Activated CD8-positive, alpha-beta T cell treated with anti-CD3 and anti-CD28 coated beads, Interleukin-2, amount 10 ng/mL, durations not matched to agents 7 days and 5 days (primary cell): ENCODE measurements at regions of chr7 and their contacts with region 1.

Region 1: DNA sequence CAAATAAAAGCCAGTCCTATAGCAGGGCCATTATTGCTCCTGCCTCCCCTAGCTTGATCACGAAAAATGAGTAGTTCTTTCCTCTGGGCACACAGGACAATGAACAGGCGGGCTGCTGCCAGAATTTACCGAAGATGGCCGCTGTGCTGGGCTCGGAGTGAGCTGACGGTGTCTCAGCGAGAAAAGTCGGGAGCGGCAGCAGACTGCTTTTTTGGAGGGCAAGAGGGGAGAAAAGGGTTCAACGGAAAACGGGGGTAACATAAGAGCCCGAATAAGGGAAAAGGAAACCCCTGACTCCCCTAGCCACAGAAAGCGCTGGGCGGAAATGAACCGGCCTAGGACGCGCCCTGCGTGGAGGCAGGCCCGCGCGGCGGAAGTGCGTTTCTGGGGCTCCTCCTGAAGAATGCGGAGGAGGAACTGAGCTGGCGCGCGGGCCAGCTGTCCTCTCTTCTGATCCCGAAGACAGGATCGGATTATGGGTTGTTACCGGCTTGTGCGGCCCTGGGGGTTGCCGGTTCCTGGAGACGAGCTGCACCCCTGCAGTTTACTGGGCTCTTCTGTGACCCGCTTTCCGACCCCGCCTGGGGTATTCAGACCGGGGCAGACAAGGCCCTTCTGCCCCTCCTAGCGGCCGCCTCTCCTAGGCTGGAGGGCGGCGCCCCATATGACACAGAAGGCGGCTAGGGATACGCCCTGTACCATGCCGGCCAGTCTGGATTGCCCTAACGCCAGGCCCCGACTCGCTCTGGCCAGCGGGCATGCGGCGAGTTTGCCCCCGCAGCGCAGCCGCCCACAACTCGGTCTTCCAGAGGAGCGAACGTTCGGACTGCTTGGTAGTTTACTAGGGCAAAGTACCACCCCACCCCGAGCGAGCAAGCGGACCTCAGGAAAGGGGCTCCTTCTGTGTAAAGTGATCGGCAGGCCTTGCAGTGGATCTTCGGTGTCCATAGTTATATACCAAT is 30.1 kb upstream of the KMT2E start:
- DNase-seq: peak; percentile 89
- ATAC-seq: peak; percentile 92
- H3K4me3 Mint-ChIP-seq: peak overlapping the region; percentile 100
- H3K27ac Mint-ChIP-seq: peak overlapping the region; percentile 100
- H3K4me1 Mint-ChIP-seq: peaks cover 69% of the 10 kb centered on the region
- H3K27me3 Mint-ChIP-seq: no peaks in the 10 kb centered on the region

Region 2: GRCh38 chr7:104923010-104923421 is 60.8 kb before region 1 on chr7:
- CTCF ChIA-PET with region 1: interaction called, 65 read pairs
- POLR2A ChIA-PET with region 1: interaction called, 7 read pairs
- DNase-seq: peak; percentile 86
- ATAC-seq: peak; percentile 98
- H3K4me3 Mint-ChIP-seq: no peak overlapping the region
- H3K27ac Mint-ChIP-seq: peak overlapping the region; percentile 52
- H3K4me1 Mint-ChIP-seq: peaks cover 7% of the 10 kb centered on the region
- H3K27me3 Mint-ChIP-seq: peaks cover 6% of the 10 kb centered on the region

Region 3: GRCh38 chr7:104956753-104957450 is 27.0 kb before region 1 on chr7:
- CTCF ChIA-PET with region 1: interaction called, 35 read pairs
- POLR2A ChIA-PET with region 1: interaction called, 5 read pairs
- DNase-seq: peak; percentile 69
- ATAC-seq: peak; percentile 86
- H3K4me3 Mint-ChIP-seq: peak overlapping the region; percentile 34
- H3K27ac Mint-ChIP-seq: peak overlapping the region; percentile 89
- H3K4me1 Mint-ChIP-seq: peaks cover 41% of the 10 kb centered on the region
- H3K27me3 Mint-ChIP-seq: no peaks in the 10 kb centered on the region

Region 4: GRCh38 chr7:105003275-105003674 is 19.4 kb after region 1 on chr7:
- CTCF ChIA-PET with region 1: interaction called, 21 read pairs
- POLR2A ChIA-PET with region 1: interaction called, 373 read pairs
- DNase-seq: no peak
- ATAC-seq: peak; percentile 58
- H3K4me3 Mint-ChIP-seq: peak overlapping the region; percentile 54
- H3K27ac Mint-ChIP-seq: peak overlapping the region; percentile 68
- H3K4me1 Mint-ChIP-seq: peaks cover 63% of the 10 kb centered on the region
- H3K27me3 Mint-ChIP-seq: no peaks in the 10 kb centered on the region

Region 5: GRCh38 chr7:105024743-105025142 is 40.9 kb after region 1 on chr7:
- CTCF ChIA-PET with region 1: interaction called, 11 read pairs
- POLR2A ChIA-PET with region 1: interaction called, 3 read pairs
- DNase-seq: no peak
- ATAC-seq: peak; percentile 16
- H3K4me3 Mint-ChIP-seq: no peak overlapping the region
- H3K27ac Mint-ChIP-seq: no peak overlapping the region
- H3K4me1 Mint-ChIP-seq: peaks cover 72% of the 10 kb centered on the region
- H3K27me3 Mint-ChIP-seq: no peaks in the 10 kb centered on the region

Region 6: DNA sequence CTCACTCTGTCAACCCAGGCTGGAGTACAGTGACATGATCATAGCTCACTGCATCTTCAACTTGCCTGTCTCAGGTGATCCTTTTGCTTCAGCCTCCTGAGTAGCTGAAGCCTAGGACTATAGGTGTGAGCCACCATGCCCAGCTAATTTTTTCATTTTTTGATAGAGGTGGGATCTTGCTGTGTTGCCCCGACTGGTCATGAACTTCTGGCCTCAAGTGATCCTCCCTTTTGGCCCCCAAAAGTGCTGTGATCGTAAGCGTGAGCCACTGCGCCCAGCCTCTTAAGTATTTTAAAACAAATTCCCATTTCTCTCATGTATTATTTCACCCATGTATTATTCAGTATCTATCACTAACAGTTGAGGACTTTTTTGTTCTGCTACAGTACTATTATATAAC is 73.6 kb after region 1 on chr7:
- CTCF ChIA-PET with region 1: interaction called, 10 read pairs
- POLR2A ChIA-PET with region 1: interaction called, 4 read pairs
- DNase-seq: no peak
- ATAC-seq: no peak
- H3K4me3 Mint-ChIP-seq: no peak overlapping the region
- H3K27ac Mint-ChIP-seq: no peak overlapping the region
- H3K4me1 Mint-ChIP-seq: peaks cover 5% of the 10 kb centered on the region
- H3K27me3 Mint-ChIP-seq: no peaks in the 10 kb centered on the region

Region 7: DNA sequence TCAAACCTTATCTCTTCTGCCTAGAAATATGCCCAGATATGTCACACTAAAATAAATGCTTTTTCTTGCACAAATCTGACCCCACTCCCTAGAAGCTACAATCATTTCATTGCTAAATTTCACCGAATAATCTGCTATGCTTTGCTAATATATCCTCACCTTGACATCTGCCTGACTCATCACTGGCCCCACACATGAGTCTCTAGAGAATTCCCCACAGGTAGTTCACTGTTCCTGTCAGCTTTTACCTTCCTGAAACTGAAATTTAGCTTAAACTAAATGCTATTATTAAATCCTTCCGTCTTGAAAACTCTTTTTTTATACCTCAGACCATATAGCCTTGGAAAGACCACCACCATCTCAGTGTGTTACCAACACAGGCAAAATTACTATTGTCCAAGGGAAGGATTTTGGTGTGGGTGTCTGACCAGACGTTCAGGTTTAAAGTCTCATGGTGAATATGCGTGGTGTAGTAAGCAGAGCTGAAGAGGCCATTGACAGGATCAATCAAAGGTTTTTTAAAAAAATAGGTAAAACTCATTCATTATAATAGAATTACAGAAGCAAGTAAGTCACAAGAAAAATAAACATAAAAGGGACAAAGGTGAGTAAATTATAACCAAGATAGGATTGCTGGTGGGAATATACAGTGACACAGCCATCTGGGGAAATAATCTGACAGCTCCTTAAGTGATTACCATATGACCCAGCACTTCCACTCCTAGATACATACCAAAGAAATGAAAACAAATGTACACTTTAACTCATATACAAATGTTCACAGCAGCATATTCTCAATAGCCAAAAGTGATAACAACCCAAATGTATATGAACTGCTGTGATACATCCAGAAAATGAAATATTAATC is 203.7 kb after region 1 on chr7:
- CTCF ChIA-PET with region 1: no interaction called
- POLR2A ChIA-PET with region 1: no interaction called
- DNase-seq: no peak
- ATAC-seq: no peak
- H3K4me3 Mint-ChIP-seq: no peak overlapping the region
- H3K27ac Mint-ChIP-seq: no peak overlapping the region
- H3K4me1 Mint-ChIP-seq: no peaks in the 10 kb centered on the region
- H3K27me3 Mint-ChIP-seq: no peaks in the 10 kb centered on the region